Caco-2 (cell line): ENCODE measurements at regions of chr13 and their contacts with region 1.

Region 1: GRCh38 chr13:44364348-44365049 is 9.1 kb upstream of the SERP2 start:
- DNase-seq: peak; percentile 80 to 89
- H3K4me3 ChIP-seq: no peak overlapping the region
- H3K4me3 Mint-ChIP-seq: peak overlapping the region; percentile 5
- H3K27ac Mint-ChIP-seq: peak overlapping the region; percentile 81
- H3K4me1 ChIP-seq: peaks cover 83% of the 10 kb centered on the region
- H3K4me1 Mint-ChIP-seq: peaks cover 47% of the 10 kb centered on the region
- H3K27me3 ChIP-seq: no peaks in the 10 kb centered on the region
- H3K27me3 Mint-ChIP-seq: no peaks in the 10 kb centered on the region
- CTCF ChIP-seq: no peak

Region 2: DNA sequence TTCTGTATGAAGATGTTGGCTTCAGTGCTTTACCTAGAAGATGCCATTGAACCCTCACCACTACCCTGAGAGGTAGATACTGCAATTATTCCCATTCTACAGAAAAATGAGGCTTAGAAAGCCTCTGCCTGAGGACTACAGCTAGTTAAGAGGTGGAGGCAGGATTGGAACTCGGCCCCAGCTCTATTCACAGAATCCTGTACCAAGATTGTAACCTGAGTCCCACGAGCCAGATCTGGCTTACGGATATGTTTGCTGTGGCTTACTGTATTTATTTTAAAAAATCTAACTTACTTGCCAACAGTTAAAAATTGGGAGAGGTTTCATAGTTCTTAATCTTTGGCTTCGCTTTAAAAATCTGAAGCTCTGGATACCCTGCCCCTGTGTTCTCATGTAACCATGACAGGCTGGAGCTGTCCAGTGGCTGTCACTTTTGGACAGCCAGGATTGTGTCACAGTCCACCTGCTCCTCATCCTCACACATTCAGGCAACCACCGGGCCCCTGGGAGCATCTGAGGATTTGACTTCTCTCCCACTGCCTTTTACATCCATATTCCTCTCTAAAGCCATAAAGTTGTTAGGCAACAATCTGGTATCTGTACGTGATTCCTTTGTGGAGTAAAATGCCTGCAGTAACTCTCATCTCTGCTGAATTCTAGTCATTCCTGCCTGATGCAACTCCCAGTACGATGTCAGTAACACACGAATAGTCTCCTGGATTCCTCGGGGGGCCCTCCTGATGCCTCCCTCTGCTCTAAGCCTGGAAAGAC is 151.7 kb before region 1 on chr13:
- CTCF ChIA-PET with region 1: no interaction called
- POLR2A ChIA-PET with region 1: no interaction called
- intact Hi-C with region 1: loop called (anchors 5 kb)
- DNase-seq: peak; percentile 85 to 90
- H3K4me3 ChIP-seq: no peak overlapping the region
- H3K4me3 Mint-ChIP-seq: peak overlapping the region; percentile 47
- H3K27ac Mint-ChIP-seq: peak overlapping the region; percentile 97
- H3K4me1 ChIP-seq: peaks cover 18% of the 10 kb centered on the region
- H3K4me1 Mint-ChIP-seq: peaks cover 36% of the 10 kb centered on the region
- H3K27me3 ChIP-seq: no peaks in the 10 kb centered on the region
- H3K27me3 Mint-ChIP-seq: no peaks in the 10 kb centered on the region
- CTCF ChIP-seq: no peak

Region 3: DNA sequence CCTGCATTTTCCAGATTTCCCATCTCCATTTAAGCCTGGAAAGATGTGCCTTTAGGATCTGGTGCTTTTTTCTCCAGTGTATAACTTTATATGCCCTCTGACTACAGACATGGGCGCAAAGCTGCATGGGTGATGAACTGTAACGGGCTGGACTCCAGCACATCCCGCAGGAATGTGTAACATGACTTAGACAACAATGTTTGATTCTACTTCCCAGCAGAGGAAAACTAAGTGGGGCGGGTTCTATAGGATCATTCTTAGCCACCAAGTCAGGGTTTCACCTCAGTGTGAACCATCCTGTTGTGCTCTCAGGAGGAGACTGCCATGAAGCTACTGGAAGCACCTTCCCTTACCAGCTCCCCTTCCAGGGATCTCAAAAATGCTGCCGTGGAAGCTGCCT is 84.0 kb before region 1 on chr13:
- CTCF ChIA-PET with region 1: no interaction called
- POLR2A ChIA-PET with region 1: no interaction called
- intact Hi-C with region 1: loop called (anchors 5 kb)
- DNase-seq: no peak
- H3K4me3 ChIP-seq: no peak overlapping the region
- H3K4me3 Mint-ChIP-seq: no peak overlapping the region
- H3K27ac Mint-ChIP-seq: peak overlapping the region; percentile 86
- H3K4me1 ChIP-seq: peaks cover 52% of the 10 kb centered on the region
- H3K4me1 Mint-ChIP-seq: peaks cover 39% of the 10 kb centered on the region
- H3K27me3 ChIP-seq: no peaks in the 10 kb centered on the region
- H3K27me3 Mint-ChIP-seq: no peaks in the 10 kb centered on the region
- CTCF ChIP-seq: no peak

Region 4: DNA sequence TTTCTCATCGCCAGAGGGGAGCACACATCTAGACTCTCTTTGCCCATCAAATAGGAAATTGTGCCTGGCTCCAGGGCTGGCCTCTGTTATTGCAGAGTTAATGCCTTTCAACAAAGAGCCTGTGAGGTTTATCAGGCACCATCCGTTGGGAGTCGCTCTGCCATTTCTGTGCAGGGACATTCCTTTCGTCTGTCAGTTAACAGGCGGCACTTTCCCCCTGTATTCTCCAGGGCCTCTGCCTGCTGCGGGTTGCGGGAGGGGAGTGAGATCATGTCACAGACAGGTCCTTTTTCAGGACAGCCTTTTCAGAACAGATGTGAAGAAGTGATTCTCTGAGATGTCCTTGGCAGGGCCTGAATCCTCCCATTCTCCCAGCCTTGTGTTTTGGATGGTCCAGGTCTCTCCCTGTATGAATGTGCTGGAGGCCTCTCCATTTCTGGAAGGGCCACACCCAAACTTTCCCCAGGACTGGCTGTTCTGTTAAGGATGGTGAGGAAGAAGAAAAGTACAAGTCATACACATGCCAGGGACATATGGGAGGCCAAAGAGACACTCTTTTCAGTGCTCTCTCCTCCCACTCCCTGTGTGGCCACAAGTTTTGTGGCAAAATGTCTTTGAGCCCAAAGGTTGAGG is 24.0 kb after region 1 on chr13:
- CTCF ChIA-PET with region 1: interaction called, 10 read pairs
- POLR2A ChIA-PET with region 1: interaction called, 8 read pairs
- intact Hi-C with region 1: loop called (anchors 1 kb)
- DNase-seq: peak; percentile 51 to 68
- H3K4me3 ChIP-seq: no peak overlapping the region
- H3K4me3 Mint-ChIP-seq: no peak overlapping the region
- H3K27ac Mint-ChIP-seq: peak overlapping the region; percentile 76
- H3K4me1 ChIP-seq: peaks cover 56% of the 10 kb centered on the region
- H3K4me1 Mint-ChIP-seq: peaks cover 51% of the 10 kb centered on the region
- H3K27me3 ChIP-seq: no peaks in the 10 kb centered on the region
- H3K27me3 Mint-ChIP-seq: no peaks in the 10 kb centered on the region
- CTCF ChIP-seq: no peak

Region 5: DNA sequence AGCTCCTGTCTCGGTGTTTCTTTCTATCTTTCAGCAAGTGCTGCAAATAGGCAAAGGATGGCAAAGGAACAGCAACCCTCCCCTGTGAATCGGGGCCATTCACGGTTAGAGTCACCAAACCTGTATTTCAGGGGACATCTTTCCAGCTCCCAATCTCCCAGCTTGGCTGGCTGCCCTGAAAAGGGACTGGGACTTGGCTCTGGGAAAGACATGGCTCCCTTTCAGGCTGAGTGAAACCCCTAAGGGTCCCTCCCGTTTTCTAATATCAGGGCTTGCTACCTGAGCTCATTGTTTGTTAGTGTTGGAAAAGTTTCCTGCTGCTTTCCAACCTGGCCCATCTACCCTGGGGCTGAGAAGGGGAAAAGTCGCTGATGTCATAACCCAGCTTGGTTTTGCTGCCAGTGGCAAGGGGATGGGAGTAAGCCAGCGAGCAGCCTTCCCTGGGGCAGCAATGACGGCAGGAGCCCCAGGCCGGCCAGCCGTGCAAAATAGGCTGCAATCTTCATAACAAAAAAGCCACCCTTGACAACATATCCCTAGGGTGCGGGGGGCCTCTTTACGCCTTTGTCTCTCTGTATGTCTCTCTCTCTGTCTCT is 39.1 kb after region 1 on chr13:
- CTCF ChIA-PET with region 1: interaction called, 3 read pairs
- POLR2A ChIA-PET with region 1: interaction called, 8 read pairs
- intact Hi-C with region 1: loop called (anchors 1 kb)
- DNase-seq: peak in 1 of 2 experiments; percentile 49
- H3K4me3 ChIP-seq: no peak overlapping the region
- H3K4me3 Mint-ChIP-seq: peak overlapping the region; percentile 54
- H3K27ac Mint-ChIP-seq: peak overlapping the region; percentile 79
- H3K4me1 ChIP-seq: peaks cover 46% of the 10 kb centered on the region
- H3K4me1 Mint-ChIP-seq: peaks cover 24% of the 10 kb centered on the region
- H3K27me3 ChIP-seq: no peaks in the 10 kb centered on the region
- H3K27me3 Mint-ChIP-seq: no peaks in the 10 kb centered on the region
- CTCF ChIP-seq: no peak